Transverse colon (tissue), 4 donors: ENCODE measurements at regions of chr19 and their contacts with region 1.

Region 1: DNA sequence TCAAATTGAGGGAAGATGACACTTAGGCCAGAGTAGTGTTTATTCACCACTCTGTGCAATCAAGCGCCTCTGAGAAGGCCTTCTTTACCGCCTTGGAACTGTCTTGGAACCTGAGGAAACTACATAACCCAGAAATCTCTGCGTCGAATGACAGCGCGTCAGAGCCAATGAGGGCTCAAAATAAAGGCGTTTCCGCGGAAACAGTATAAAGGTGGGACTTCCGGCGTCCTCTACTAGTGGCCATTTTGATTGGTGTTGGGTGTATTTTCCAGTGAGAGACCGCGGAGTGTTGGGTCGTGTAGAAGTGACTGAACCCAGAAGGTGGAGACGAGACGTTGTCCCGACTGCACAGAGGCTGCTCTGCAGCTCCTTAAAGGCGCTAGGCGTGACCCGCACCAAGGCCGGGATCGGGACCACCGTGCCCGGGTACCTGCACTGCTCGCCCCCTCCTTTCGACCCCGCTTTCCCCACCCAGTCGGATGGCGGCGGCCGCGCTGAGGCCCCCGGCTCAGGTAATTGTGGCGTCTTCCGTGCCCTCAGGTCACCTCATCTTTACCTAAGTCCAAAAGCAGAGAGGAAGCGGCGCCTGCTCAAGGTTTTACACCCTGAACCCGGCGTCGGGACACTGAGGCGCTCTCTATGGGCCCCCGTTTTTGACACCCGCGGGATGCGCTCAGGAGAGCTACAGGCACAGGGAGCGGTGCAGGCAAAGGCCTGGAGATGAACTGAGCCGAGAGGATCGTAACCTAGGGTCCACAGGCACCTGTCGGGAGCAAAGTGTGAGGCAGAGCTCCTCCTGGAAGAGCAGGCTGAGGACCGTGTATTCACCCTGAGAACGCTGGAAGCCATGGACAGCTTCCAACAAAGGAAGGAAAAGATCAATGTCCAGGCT is at the start of gene ZNF776:
- DNase-seq: peak; percentile 85
- H3K4me3 ChIP-seq: peak within 1 kb of the TSS; percentile 58 to 92 (median 84)
- H3K27ac ChIP-seq: peak within 1 kb of the TSS; percentile 81 to 89 (median 88)
- H3K4me1 ChIP-seq: peaks cover 0 to 14% (median 6%) of the 10 kb centered on the region in 4 donors
- H3K27me3 ChIP-seq: no peaks in the 10 kb centered on the region
- CTCF ChIP-seq: peak in 2 of 5 experiments; percentile 6 to 20
- EP300 ChIP-seq: no peak
- POLR2A ChIP-seq: peak; percentile 45
- total RNA-seq, gene ZNF776: 15.0 to 120 (median 16.7) TPM

Region 2: DNA sequence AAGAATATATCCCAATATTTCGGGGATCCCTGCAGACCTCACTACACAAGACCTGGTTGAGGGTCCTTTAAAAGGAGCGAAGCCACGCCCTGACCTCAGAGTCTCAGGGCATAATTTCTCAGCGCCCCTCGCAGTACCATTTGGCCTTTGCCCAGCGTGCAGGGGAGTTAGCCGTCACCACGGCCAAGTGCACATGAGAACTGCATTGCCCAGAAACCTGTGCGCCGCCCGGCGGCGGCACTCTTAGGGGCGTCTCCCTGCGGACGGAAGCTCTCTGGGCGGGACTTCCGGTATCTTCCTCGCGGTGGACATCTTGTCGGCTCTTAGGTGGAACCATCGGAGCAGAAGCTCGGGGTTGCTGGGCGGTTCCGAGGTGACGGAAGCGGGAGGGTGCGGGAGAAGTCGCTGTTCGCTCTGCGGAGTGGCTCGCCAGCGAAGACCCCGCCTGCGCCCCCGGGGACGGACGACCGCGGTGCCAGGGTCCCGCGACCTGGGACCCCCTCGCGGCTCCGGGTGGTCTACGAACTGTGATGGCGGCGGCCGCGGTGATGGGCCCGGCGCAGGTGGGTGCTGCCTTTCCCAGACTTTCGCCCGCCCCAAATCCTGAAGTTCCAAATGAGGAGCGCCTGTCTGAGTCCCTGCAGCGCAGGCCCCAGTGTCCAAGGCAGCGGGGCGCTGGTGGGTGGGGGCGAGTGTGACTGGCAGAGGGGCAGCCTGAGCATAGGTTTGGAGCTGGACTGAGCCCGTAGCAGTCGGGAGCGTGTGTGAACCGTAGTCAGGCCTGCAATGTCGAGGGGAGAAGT is 132.7 kb before region 1 on chr19 and contains the start of gene ZNF134:
- in situ Hi-C with region 1: no loop called
- intact Hi-C with region 1: no loop called
- DNase-seq: peak; percentile 94
- H3K4me3 ChIP-seq: peak within 1 kb of the TSS; percentile 72 to 99 (median 89)
- H3K27ac ChIP-seq: peak within 1 kb of the TSS; percentile 57 to 80 (median 66)
- H3K4me1 ChIP-seq: peaks cover 4 to 10% (median 7%) of the 10 kb centered on the region in 4 donors
- H3K27me3 ChIP-seq: no peaks in the 10 kb centered on the region
- CTCF ChIP-seq: peak in 4 of 5 experiments; percentile 11 to 26 (median 22)
- EP300 ChIP-seq: no peak
- POLR2A ChIP-seq: peak; percentile 22
- total RNA-seq, gene ZNF134: 1.6 to 16.8 (median 13.8) TPM

Region 3: DNA sequence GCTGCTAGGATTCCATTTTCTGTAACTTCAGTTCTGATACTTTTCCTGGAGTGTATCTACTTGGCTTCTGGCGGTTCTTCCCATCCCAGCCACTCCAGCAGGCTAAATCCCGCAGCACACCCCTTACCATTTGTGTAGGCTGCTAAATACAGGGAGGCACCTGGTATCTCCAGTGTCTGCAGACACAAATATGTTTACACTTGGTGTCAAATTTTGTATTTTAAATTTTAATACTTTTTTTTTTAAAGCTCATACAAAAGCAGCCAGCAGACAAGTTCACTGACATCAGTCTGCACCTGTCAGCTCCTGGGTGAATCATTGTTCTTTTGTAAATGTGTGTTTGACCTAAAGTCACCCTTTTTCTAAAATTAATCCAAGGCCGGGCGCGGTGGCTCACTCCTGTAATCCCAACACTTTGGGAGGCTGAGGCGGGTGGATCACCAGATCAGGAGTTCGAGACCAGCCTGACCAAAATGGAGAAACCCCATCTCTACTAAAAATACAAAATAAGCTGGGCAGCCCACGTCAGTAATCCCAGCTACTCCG is 81.5 kb before region 1 on chr19:
- in situ Hi-C with region 1: no loop called
- intact Hi-C with region 1: no loop called
- DNase-seq: no peak
- H3K4me3 ChIP-seq: no peak overlapping the region
- H3K27ac ChIP-seq: no peak overlapping the region
- H3K4me1 ChIP-seq: peaks cover 3 to 14% (median 10%) of the 10 kb centered on the region in 4 donors
- H3K27me3 ChIP-seq: peaks cover 26% of the 10 kb centered on the region
- CTCF ChIP-seq: no peak
- EP300 ChIP-seq: no peak
- POLR2A ChIP-seq: no peak

Region 4: GRCh38 chr19:57903618-57904184 is 156.9 kb after region 1 on chr19:
- in situ Hi-C with region 1: loop called in 1 of 4 experiments (anchors 25 kb)
- intact Hi-C with region 1: no loop called
- DNase-seq: no peak
- H3K4me3 ChIP-seq: no peak overlapping the region
- H3K27ac ChIP-seq: peak overlapping the region in 1 of 4 donors; percentile 31
- H3K4me1 ChIP-seq: peaks cover 0 to 6% (median 0%) of the 10 kb centered on the region in 4 donors
- H3K27me3 ChIP-seq: no peaks in the 10 kb centered on the region
- CTCF ChIP-seq: peak in 1 of 5 experiments; percentile 3
- EP300 ChIP-seq: no peak
- POLR2A ChIP-seq: no peak

Region 5: GRCh38 chr19:57934820-57935665 is 188.2 kb after region 1 on chr19 and contains the start of gene ZNF418:
- in situ Hi-C with region 1: no loop called
- intact Hi-C with region 1: no loop called
- DNase-seq: peak; percentile 24
- H3K4me3 ChIP-seq: peak within 1 kb of the TSS; percentile 37 to 75 (median 52)
- H3K27ac ChIP-seq: peak within 1 kb of the TSS in 3 of 4 donors; percentile 55 to 74 (median 57)
- H3K4me1 ChIP-seq: peaks cover 0 to 10% (median 0%) of the 10 kb centered on the region in 4 donors
- H3K27me3 ChIP-seq: no peaks in the 10 kb centered on the region
- CTCF ChIP-seq: no peak
- EP300 ChIP-seq: no peak
- POLR2A ChIP-seq: no peak
- total RNA-seq, gene ZNF418: 1.9 to 6.4 (median 4.0) TPM